ENCODE measurements at regions of chr20 and their contacts with region 1.

Region 1: GRCh38 chr20:2101865-2102584 is 398 bp downstream of the STK35 start:
- DNase-seq: peak; percentile 90
- ATAC-seq: peak; percentile 79
- H3K4me3 ChIP-seq: peak overlapping the region; percentile 87
- H3K27ac ChIP-seq: peak overlapping the region; percentile 88
- H3K4me1 ChIP-seq: peaks cover 27% of the 10 kb centered on the region
- H3K27me3 ChIP-seq: no peaks in the 10 kb centered on the region
- CTCF ChIP-seq: no peak

Region 2: GRCh38 chr20:1757072-1757471 is 345.0 kb before region 1 on chr20:
- CTCF ChIA-PET with region 1: no interaction called
- POLR2A ChIA-PET with region 1: no interaction called
- intact Hi-C with region 1: no loop called
- DNase-seq: peak; percentile 39
- ATAC-seq: no peak
- H3K4me3 ChIP-seq: no peak overlapping the region
- H3K27ac ChIP-seq: no peak overlapping the region
- H3K4me1 ChIP-seq: peaks cover 31% of the 10 kb centered on the region
- H3K27me3 ChIP-seq: no peaks in the 10 kb centered on the region
- CTCF ChIP-seq: no peak

Region 3: DNA sequence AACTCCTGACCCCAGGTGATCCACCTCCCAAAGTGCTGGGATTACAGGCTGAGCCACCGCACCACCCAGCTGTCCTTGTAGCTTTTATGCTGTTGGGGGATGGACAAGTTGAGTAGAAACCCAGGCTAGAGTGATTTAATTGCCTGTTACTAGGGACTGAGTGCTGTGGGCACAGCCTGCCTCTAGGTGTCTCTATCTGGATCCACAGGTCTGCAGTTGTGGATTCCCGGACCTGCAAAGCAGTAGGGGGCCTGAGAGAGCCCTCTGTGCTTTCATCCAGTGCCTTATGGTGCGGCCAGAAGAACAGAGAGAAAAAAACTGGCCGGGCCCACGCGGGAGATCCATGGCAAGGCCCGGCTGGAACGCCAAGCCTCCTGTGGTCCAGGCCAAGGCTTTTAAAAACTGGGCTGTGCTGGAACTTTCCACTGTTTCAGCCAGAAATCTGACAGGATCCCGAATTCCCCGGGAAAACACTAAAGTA is 201.7 kb before region 1 on chr20:
- CTCF ChIA-PET with region 1: no interaction called
- POLR2A ChIA-PET with region 1: no interaction called
- intact Hi-C with region 1: loop called (anchors 10 kb)
- DNase-seq: peak; percentile 81
- ATAC-seq: peak; percentile 94
- H3K4me3 ChIP-seq: no peak overlapping the region
- H3K27ac ChIP-seq: no peak overlapping the region
- H3K4me1 ChIP-seq: peaks cover 7% of the 10 kb centered on the region; the same call in 1 of the 2 replicates
- H3K27me3 ChIP-seq: no peaks in the 10 kb centered on the region
- CTCF ChIP-seq: peak; percentile 84

Measured in PC-3 (cell line).